ENCODE measurements at regions of chr4 and their contacts with region 1.

Region 1: GRCh38 chr4:110361921-110362320 is 114.0 kb upstream of the ENPEP start:
- DNase-seq: no peak

Region 2: GRCh38 chr4:110344162-110344561 is 17.8 kb before region 1 on chr4:
- intact Hi-C with region 1: loop called in 1 of 2 experiments (anchors 1 kb)
- DNase-seq: no peak

Region 3: GRCh38 chr4:110636680-110637407 is 274.9 kb after region 1 on chr4:
- intact Hi-C with region 1: no loop called
- DNase-seq: no peak

Measured in posterior vena cava (tissue), 2 donors.